ENCODE measurements at regions of chrX and their contacts with region 1.

Region 1: DNA sequence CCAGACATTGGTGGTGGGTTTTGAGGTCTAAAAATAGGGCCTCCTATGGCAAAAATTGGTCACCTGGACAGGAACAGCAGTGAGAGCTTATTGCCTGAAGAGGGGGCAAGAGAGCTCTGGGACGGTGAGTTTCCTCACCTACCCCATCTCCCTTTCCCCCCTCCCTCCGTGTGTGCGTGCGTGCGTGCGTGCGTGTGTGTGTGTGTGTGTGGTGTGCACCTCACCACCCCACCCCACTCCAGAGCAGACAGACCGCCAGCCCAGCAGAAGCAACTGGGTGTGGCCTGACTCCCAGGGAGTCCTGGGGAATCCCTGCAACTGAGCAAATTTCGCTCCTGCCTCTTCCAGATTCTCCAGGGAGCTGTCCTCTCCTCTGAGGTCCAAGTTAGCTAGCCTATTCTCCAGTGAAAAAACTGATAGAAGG is 44.7 kb downstream of the PRPS1 start:
- DNase-seq: peak; percentile 88
- H3K4me3 Mint-ChIP-seq: peak overlapping the region; percentile 51
- H3K27ac Mint-ChIP-seq: peak overlapping the region; percentile 83
- H3K4me1 Mint-ChIP-seq: peaks cover 42% of the 10 kb centered on the region
- H3K27me3 Mint-ChIP-seq: no peaks in the 10 kb centered on the region

Region 2: GRCh38 chrX:106963111-106963510 is 709.9 kb before region 1 on chrX:
- CTCF ChIA-PET with region 1: no interaction called
- POLR2A ChIA-PET with region 1: no interaction called
- intact Hi-C with region 1: no loop called
- DNase-seq: no peak
- H3K4me3 Mint-ChIP-seq: no peak overlapping the region
- H3K27ac Mint-ChIP-seq: no peak overlapping the region
- H3K4me1 Mint-ChIP-seq: no peaks in the 10 kb centered on the region
- H3K27me3 Mint-ChIP-seq: no peaks in the 10 kb centered on the region

Region 3: DNA sequence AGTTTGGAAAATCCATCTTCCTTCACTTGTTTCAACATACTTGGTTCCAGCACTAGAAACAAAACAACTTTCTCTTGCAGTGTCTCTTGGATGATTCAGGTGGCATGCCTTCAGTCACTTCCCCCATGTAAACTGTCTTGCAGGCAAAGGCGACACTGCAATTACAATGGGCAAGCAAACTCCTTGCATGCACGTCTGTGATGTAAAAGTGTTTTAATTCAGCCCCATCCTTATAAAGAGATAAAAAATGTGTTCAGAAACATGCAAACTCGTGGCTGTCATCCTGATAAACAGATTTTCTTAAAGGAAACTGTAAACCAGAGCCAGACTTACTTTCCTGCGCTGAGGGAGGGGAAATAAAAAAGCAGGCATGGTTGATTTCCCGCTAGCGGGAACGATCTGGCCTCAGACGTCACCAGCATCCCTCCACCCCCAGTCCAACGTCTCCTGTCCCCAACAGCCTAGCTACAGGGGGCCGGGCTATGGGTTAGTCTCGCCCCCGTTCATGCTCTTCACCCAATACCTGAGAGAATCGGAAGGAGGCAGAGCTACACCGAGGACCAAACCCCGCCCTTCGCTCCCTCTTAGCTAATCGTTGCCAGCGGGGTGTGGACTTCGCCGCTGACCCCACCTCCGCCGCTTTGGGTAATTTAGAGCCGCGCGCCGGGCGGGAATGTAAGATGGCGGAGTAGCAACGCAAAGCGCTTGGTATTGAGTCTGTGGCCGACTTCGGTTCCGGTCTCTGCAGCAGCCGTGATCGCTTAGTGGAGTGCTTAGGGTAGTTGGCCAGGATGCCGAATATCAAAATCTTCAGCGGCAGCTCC is 44.9 kb before region 1 on chrX and contains the start of gene PRPS1:
- CTCF ChIA-PET with region 1: interaction called, 4 read pairs
- POLR2A ChIA-PET with region 1: interaction called, 14 read pairs
- intact Hi-C with region 1: loop called (anchors 1 kb)
- DNase-seq: peak; percentile 93
- H3K4me3 Mint-ChIP-seq: peak within 1 kb of the TSS; percentile 84
- H3K27ac Mint-ChIP-seq: peak within 1 kb of the TSS; percentile 85
- H3K4me1 Mint-ChIP-seq: peaks cover 25% of the 10 kb centered on the region
- H3K27me3 Mint-ChIP-seq: no peaks in the 10 kb centered on the region
- total RNA-seq, gene PRPS1: 132 to 141 TPM

Region 4: GRCh38 chrX:107662145-107662544 is 10.8 kb before region 1 on chrX:
- CTCF ChIA-PET with region 1: interaction called, 10 read pairs
- POLR2A ChIA-PET with region 1: interaction called, 3 read pairs
- intact Hi-C with region 1: no loop called
- DNase-seq: no peak
- H3K4me3 Mint-ChIP-seq: no peak overlapping the region
- H3K27ac Mint-ChIP-seq: no peak overlapping the region
- H3K4me1 Mint-ChIP-seq: peaks cover 8% of the 10 kb centered on the region
- H3K27me3 Mint-ChIP-seq: no peaks in the 10 kb centered on the region

Region 5: GRCh38 chrX:107710617-107711391 is 37.8 kb after region 1 on chrX:
- CTCF ChIA-PET with region 1: interaction called, 275 read pairs
- POLR2A ChIA-PET with region 1: interaction called, 253 read pairs
- intact Hi-C with region 1: loop called (anchors 1 kb)
- DNase-seq: peak; percentile 59
- H3K4me3 Mint-ChIP-seq: peak overlapping the region; percentile 62
- H3K27ac Mint-ChIP-seq: peak overlapping the region; percentile 91
- H3K4me1 Mint-ChIP-seq: peaks cover 59% of the 10 kb centered on the region
- H3K27me3 Mint-ChIP-seq: no peaks in the 10 kb centered on the region

Region 6: GRCh38 chrX:107741404-107741790 is 68.4 kb after region 1 on chrX:
- CTCF ChIA-PET with region 1: interaction called, 4 read pairs
- POLR2A ChIA-PET with region 1: interaction called, 3 read pairs
- intact Hi-C with region 1: loop called (anchors 1 kb)
- DNase-seq: no peak
- H3K4me3 Mint-ChIP-seq: peak overlapping the region; percentile 79
- H3K27ac Mint-ChIP-seq: peak overlapping the region; percentile 95
- H3K4me1 Mint-ChIP-seq: peaks cover 39% of the 10 kb centered on the region
- H3K27me3 Mint-ChIP-seq: peaks cover 2% of the 10 kb centered on the region

Region 7: GRCh38 chrX:107826238-107827029 is 153.5 kb after region 1 on chrX:
- CTCF ChIA-PET with region 1: interaction called, 3 read pairs
- POLR2A ChIA-PET with region 1: interaction called, 7 read pairs
- intact Hi-C with region 1: loop called (anchors 2 kb)
- DNase-seq: peak; percentile 38
- H3K4me3 Mint-ChIP-seq: peak overlapping the region; percentile 74
- H3K27ac Mint-ChIP-seq: peak overlapping the region; percentile 71
- H3K4me1 Mint-ChIP-seq: peaks cover 43% of the 10 kb centered on the region
- H3K27me3 Mint-ChIP-seq: no peaks in the 10 kb centered on the region

Region 8: GRCh38 chrX:107894038-107894437 is 221.1 kb after region 1 on chrX:
- CTCF ChIA-PET with region 1: interaction called, 18 read pairs
- POLR2A ChIA-PET with region 1: no interaction called
- intact Hi-C with region 1: loop called (anchors 5 kb)
- DNase-seq: no peak
- H3K4me3 Mint-ChIP-seq: no peak overlapping the region
- H3K27ac Mint-ChIP-seq: no peak overlapping the region
- H3K4me1 Mint-ChIP-seq: no peaks in the 10 kb centered on the region
- H3K27me3 Mint-ChIP-seq: no peaks in the 10 kb centered on the region

Region 9: GRCh38 chrX:108834036-108834435 is 1161.1 kb after region 1 on chrX:
- CTCF ChIA-PET with region 1: no interaction called
- POLR2A ChIA-PET with region 1: no interaction called
- intact Hi-C with region 1: no loop called
- DNase-seq: no peak
- H3K4me3 Mint-ChIP-seq: no peak overlapping the region
- H3K27ac Mint-ChIP-seq: no peak overlapping the region
- H3K4me1 Mint-ChIP-seq: no peaks in the 10 kb centered on the region
- H3K27me3 Mint-ChIP-seq: no peaks in the 10 kb centered on the region